Posterior vena cava (tissue), 2 donors: ENCODE measurements at regions of chr17 and their contacts with region 1.

Region 1: GRCh38 chr17:2707721-2708584 is 3.6 kb downstream of the CLUH start:
- DNase-seq: peak; percentile 81

Region 2: GRCh38 chr17:1648963-1649843 is 1058.8 kb before region 1 on chr17:
- intact Hi-C with region 1: loop called in 1 of 2 experiments (anchors 10 kb)
- DNase-seq: peak; percentile 98

Region 3: GRCh38 chr17:2647957-2648356 is 60.0 kb before region 1 on chr17:
- intact Hi-C with region 1: no loop called
- DNase-seq: no peak

Region 4: DNA sequence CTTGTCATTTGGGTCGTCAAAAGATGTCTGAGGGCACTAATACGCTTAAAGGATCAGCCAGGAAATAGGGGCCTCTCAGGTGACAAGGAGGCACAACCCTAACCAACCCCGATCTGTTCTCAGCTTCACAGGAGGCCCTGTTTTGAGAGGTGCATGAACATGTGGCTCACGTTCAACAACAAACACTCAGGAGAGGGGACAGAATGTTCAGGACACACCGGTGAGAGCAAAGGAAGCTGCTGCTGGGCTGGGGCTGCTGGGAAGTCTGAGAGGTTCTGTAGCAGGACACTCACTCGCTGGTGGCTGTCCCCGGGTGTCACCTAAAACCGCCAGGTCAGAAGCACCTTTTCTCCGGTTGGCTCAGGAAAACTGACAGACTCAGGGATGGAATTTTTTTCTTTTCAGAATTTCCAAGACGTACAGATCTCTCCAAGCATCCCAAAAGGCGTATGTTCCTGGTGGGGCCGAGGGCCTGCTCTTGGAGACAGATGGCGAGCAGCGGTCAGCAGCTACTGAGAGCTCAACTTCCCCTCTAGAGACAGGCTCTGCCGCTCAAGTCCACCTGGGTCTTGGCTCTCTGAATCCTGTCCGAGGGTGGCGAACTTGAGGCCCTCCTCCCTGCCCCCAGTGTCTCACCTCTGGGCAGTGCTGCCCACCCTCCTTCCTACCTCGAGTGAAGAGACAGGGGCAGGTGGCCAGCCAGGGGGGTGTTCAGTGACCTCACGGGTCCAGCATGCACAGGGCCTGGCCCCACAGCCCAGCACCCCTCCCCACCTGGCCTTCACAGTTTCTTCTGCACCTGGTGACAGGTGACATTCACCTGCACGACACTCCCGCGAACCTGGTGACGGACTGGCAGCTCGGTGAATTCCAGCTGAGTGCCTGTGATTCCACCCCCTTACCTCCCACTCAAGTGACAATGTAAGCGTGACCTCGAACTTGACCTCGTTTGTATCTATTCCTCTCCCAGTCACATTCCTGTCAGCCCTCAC is 19.3 kb before region 1 on chr17:
- intact Hi-C with region 1: no loop called
- DNase-seq: no peak

Region 5: DNA sequence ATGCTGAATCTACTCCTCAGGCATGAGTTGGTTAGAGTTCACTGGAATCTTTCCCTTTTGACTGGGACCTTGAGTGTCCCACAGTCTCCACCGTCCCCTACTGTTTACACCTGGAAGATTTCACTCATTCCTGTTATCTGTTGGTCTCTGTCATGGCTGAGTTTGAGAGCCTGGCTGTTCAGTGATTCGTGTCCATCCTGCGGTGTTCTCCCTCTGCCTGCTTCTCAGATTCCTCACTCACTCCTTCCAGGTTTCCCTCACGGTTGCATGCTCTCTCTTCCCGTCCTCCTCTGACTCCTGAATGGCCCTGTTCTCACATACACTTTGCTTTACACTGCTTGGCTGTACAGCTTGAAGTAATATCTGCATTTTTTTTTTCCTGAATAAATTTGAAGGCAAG is 331.0 kb after region 1 on chr17:
- intact Hi-C with region 1: no loop called
- DNase-seq: no peak